Activated CD4-positive, alpha-beta memory T cell treated with anti-CD3 and anti-CD28 coated beads for 36 hours (primary cell): ENCODE measurements at regions of chr5 and their contacts with region 1.

Region 1: GRCh38 chr5:43484106-43484849 is 613 bp upstream of the TMEM267 start:
- DNase-seq: peak; percentile 93
- H3K4me3 Mint-ChIP-seq: peak overlapping the region; percentile 98
- H3K27ac Mint-ChIP-seq: peak overlapping the region; percentile 100
- H3K4me1 Mint-ChIP-seq: peaks cover 49% of the 10 kb centered on the region
- H3K27me3 Mint-ChIP-seq: no peaks in the 10 kb centered on the region

Region 2: GRCh38 chr5:42950440-42951292 is 533.6 kb before region 1 on chr5:
- CTCF ChIA-PET with region 1: no interaction called
- POLR2A ChIA-PET with region 1: interaction called, 4 read pairs
- intact Hi-C with region 1: loop called (anchors 2 kb)
- DNase-seq: peak; percentile 86
- H3K4me3 Mint-ChIP-seq: peak overlapping the region; percentile 94
- H3K27ac Mint-ChIP-seq: peak overlapping the region; percentile 97
- H3K4me1 Mint-ChIP-seq: peaks cover 30% of the 10 kb centered on the region
- H3K27me3 Mint-ChIP-seq: no peaks in the 10 kb centered on the region

Region 3: DNA sequence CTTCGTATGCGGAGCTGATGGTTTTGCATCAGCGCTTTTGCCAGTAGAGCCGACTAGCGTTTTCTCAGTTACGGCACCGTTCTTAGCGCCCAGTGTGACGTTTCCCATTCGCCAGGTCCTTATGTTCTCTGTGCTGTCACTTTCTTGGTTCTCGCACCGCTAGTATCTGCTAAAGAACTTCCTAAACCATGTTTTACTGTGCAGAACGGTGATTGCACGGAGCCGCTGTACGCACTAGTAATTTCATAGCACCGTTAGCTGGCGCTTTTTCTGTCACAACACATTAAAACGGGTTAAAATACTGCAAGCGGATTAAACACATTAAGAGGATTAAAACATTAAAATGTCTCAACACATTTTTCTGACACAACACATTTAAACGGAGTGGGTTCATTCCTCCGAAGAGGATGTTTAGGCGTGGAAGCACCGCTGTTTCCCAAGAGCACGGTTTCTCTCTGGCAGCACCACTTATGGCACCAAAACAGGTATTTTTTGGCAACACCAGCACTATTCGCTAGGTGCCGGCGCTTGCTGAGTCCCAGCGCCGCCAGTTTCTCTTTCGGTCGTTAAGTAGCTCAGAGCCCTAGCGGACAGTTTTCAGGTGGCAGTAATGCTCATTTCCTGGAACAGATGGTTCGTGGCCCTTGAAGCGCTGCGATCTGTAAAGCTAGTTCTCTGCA is 464.5 kb before region 1 on chr5:
- CTCF ChIA-PET with region 1: interaction called, 4 read pairs
- POLR2A ChIA-PET with region 1: interaction called, 4 read pairs
- intact Hi-C with region 1: loop called (anchors 2 kb)
- DNase-seq: peak; percentile 91
- H3K4me3 Mint-ChIP-seq: peak overlapping the region; percentile 97
- H3K27ac Mint-ChIP-seq: peak overlapping the region; percentile 98
- H3K4me1 Mint-ChIP-seq: peaks cover 32% of the 10 kb centered on the region
- H3K27me3 Mint-ChIP-seq: no peaks in the 10 kb centered on the region

Region 4: DNA sequence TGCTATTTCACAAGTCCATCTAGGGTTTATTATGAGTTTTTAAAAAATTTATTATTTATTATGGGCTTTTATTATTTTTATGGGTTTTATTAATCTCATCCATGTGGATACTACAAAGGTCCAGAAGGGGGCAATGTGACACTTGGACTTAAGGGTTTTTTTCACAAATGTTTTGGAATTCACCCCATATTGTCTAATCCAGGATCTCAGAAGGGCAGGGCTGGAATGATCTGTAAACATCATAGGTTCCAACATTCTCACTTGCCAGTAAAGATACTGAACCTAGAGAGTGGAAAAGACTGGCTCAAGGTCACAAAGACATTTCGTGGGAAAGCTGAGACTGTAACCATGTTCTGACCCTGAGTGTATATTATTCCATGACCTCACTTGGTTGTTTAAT is 256.6 kb before region 1 on chr5:
- CTCF ChIA-PET with region 1: interaction called, 3 read pairs
- POLR2A ChIA-PET with region 1: interaction called, 3 read pairs
- intact Hi-C with region 1: loop called (anchors 10 kb)
- DNase-seq: no peak
- H3K4me3 Mint-ChIP-seq: no peak overlapping the region
- H3K27ac Mint-ChIP-seq: no peak overlapping the region
- H3K4me1 Mint-ChIP-seq: no peaks in the 10 kb centered on the region
- H3K27me3 Mint-ChIP-seq: no peaks in the 10 kb centered on the region

Region 5: GRCh38 chr5:43396762-43397304 is 87.4 kb before region 1 on chr5:
- CTCF ChIA-PET with region 1: interaction called, 12 read pairs
- POLR2A ChIA-PET with region 1: interaction called, 16 read pairs
- intact Hi-C with region 1: loop called (anchors 1 kb)
- DNase-seq: peak; percentile 75
- H3K4me3 Mint-ChIP-seq: peak overlapping the region; percentile 89
- H3K27ac Mint-ChIP-seq: peak overlapping the region; percentile 87
- H3K4me1 Mint-ChIP-seq: peaks cover 31% of the 10 kb centered on the region
- H3K27me3 Mint-ChIP-seq: no peaks in the 10 kb centered on the region

Region 6: GRCh38 chr5:43533646-43534045 is 49.4 kb after region 1 on chr5:
- CTCF ChIA-PET with region 1: interaction called, 3 read pairs
- POLR2A ChIA-PET with region 1: interaction called, 3 read pairs
- intact Hi-C with region 1: loop called (anchors 1 kb)
- DNase-seq: peak; percentile 29
- H3K4me3 Mint-ChIP-seq: no peak overlapping the region
- H3K27ac Mint-ChIP-seq: peak overlapping the region; percentile 79
- H3K4me1 Mint-ChIP-seq: peaks cover 12% of the 10 kb centered on the region
- H3K27me3 Mint-ChIP-seq: no peaks in the 10 kb centered on the region

Region 7: DNA sequence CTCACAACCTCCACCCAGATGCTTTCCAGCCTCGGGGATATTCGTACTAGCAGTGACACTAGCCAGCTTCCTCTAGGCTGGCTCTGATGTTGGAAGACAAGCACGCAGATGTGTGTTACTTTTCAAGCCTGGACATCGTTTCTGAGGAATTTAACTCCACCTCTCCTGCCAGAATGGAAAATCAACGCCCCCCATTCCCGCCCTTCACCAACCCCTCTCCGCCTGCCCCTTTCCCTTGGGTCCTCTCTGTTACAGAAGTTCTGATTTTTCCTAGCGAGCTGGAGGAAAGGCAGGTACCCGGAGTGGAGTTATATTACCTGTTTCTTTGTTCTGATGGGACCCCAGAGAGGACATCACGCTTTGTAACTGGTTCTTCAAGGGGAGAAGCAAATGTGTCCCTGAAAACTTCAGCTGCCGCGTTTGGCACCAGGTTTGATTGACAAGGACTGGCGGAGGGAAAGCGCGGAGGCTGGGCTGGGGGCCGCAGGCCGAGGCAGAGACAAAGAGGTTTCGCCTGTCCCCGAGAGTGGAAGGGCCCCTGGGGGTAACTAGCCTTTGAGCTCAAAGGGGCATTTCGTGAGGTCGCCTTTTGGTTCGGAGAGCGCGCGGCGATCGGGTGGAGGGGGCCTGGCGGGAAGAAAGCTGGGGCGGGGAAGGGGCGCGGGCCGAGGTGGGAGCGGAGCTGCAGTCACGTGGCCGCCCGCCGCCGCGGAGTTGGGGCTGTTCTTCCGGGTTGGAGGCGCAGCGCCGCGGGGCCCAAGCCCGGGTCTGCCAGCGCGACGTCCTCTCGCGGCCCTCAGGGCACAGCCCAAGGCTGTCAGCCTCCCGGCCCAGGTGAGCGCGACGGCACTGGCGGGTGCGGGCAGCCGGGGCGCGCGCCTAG is 118.4 kb after region 1 on chr5 and contains the start of gene NNT:
- CTCF ChIA-PET with region 1: interaction called, 9 read pairs
- POLR2A ChIA-PET with region 1: interaction called, 33 read pairs
- intact Hi-C with region 1: loop called (anchors 1 kb)
- DNase-seq: peak; percentile 84
- H3K4me3 Mint-ChIP-seq: peak within 1 kb of the TSS; percentile 97
- H3K27ac Mint-ChIP-seq: peak within 1 kb of the TSS; percentile 93
- H3K4me1 Mint-ChIP-seq: peaks cover 35% of the 10 kb centered on the region
- H3K27me3 Mint-ChIP-seq: no peaks in the 10 kb centered on the region
- total RNA-seq, gene NNT: 96.6 to 99.9 TPM

Region 8: DNA sequence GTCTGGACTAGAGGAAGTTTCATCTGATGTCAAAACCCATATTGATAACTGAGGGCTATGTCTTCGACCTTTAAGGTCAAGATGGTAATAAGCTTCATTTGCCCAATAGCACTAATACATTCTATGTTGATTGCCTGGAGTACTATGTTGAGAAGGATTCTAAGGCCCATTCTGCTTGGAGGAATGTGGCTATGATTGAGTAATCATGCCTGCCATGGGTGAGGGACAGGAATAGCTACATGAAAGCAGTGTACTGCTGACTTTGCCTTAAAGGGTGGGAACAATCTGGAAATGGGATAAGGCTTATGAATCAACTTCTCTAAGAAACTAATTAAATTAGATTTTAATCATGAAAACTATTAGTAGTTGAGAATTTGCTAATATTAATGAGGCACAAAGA is 132.3 kb after region 1 on chr5:
- CTCF ChIA-PET with region 1: no interaction called
- POLR2A ChIA-PET with region 1: no interaction called
- intact Hi-C with region 1: no loop called
- DNase-seq: no peak
- H3K4me3 Mint-ChIP-seq: no peak overlapping the region
- H3K27ac Mint-ChIP-seq: no peak overlapping the region
- H3K4me1 Mint-ChIP-seq: peaks cover 2% of the 10 kb centered on the region
- H3K27me3 Mint-ChIP-seq: no peaks in the 10 kb centered on the region